ENCODE measurements at regions of chr3 and their contacts with region 1.

Region 1: GRCh38 chr3:11060500-11061251 is 68.1 kb downstream of the SLC6A1 start:
- H3K4me3 ChIP-seq: no peak overlapping the region
- H3K27ac ChIP-seq: no peak overlapping the region
- H3K4me1 ChIP-seq: no peaks in the 10 kb centered on the region
- CTCF ChIP-seq: peak; percentile 87

Region 2: GRCh38 chr3:10945683-10946287 is 114.9 kb before region 1 on chr3:
- CTCF ChIA-PET with region 1: interaction called, 142 read pairs
- POLR2A ChIA-PET with region 1: no interaction called
- H3K4me3 ChIP-seq: no peak overlapping the region
- H3K27ac ChIP-seq: no peak overlapping the region
- H3K4me1 ChIP-seq: no peaks in the 10 kb centered on the region
- CTCF ChIP-seq: peak; percentile 77

Region 3: DNA sequence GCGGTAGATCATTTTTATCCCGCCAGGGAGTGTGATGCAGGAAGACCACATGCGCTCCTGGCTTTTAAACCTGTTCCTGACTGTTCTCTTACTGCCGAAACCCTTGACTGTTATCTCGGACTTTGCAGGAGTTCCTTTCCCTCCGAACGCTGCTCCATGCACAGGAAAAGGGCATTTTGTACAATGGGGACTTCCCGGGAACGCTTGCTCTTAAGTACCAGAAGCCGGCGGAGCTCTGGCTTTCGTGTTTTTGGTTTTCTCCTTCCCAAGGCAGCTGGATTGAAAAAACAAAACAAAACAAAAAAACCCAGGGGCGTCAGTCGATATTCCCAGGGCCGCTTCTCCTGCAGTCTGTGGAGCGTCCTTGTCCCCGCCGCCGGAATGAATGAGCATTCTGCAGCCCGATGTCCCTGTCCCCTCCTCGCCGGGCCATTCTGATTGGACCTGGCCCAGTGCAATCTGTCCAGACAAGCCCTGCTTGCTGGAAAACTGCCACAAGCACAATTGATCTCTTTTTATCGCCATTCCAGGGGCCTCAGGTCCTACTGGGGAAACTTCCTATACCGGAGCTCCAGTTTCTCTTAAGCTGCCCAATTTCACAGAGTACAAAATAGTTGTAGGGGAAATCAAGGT is 23.3 kb before region 1 on chr3:
- CTCF ChIA-PET with region 1: interaction called, 11 read pairs
- POLR2A ChIA-PET with region 1: no interaction called
- H3K4me3 ChIP-seq: no peak overlapping the region
- H3K27ac ChIP-seq: no peak overlapping the region
- H3K4me1 ChIP-seq: no peaks in the 10 kb centered on the region
- CTCF ChIP-seq: no peak

Region 4: DNA sequence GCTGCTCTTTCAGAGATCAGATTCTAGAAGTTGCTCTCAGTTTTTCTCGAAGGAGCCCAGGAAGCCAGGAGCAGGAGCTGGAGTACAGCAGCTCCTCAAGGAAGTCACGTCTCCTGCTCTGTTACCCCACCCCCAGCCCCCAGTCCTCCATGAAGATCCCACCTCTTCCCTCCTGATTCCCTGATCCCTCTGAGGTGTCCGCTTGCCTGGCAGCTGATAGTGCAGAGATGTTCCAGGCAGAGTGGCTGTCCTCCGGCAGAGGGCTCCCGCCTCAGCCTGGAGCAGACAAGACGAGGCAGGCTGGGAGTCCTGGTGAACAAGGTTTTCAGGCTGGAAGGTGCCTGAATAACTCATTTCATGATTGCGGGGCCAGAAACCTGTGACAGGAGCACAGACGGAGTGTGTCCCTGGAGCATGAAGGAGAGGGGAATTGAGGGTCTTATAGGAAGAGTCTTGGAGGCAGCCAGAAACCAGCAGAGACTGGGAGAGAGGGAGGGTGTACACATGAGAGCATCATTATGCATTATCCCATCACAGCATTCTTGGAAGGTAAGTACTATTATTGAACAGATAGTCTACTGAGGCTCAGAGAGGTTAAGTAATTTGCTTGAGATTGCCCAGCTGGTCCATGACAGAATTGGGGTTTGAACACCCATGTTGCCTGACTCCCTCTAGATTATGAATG is 94.8 kb after region 1 on chr3:
- CTCF ChIA-PET with region 1: interaction called, 13 read pairs
- POLR2A ChIA-PET with region 1: no interaction called
- H3K4me3 ChIP-seq: peak overlapping the region; percentile 48
- H3K27ac ChIP-seq: no peak overlapping the region
- H3K4me1 ChIP-seq: peaks cover 5% of the 10 kb centered on the region
- CTCF ChIP-seq: peak; percentile 69

Region 5: DNA sequence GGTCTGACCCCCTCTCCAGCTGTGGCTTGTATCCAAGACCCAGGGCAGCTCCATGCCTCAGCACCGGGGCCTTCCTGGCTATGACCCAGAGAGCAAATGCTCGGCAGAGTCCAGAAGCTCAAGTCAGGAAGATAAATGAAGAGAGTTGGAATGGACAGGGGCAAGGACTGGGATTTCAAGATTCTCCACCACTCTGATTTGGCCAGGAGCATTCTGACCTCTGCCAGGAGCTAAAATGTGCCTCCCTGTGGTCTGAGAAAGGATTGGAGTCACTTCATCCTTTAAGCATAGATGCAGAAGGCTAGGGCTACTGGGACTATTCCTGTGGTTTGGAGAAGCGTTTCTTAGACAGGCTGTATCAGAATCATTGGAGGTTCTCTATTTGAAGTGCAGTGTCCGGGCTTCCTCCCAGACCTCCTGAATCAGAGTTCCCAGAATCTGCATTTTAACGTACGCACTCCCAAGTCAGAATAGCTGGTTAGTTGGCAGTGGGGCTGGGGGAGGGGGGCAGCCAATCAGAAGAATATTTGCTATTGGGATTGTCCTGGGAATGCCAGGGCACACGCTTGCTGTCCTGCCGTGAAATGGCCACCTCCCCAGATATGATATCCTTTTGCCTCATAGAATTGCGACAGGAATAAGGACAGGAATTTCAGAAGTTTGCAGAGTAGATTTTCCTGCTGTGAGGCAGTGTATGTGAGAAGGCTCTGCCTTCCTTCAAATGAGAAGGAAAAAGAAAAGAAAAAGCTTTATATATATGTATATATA is 151.0 kb after region 1 on chr3:
- CTCF ChIA-PET with region 1: interaction called, 26 read pairs
- POLR2A ChIA-PET with region 1: no interaction called
- H3K4me3 ChIP-seq: no peak overlapping the region
- H3K27ac ChIP-seq: no peak overlapping the region
- H3K4me1 ChIP-seq: no peaks in the 10 kb centered on the region
- CTCF ChIP-seq: no peak

Region 6: DNA sequence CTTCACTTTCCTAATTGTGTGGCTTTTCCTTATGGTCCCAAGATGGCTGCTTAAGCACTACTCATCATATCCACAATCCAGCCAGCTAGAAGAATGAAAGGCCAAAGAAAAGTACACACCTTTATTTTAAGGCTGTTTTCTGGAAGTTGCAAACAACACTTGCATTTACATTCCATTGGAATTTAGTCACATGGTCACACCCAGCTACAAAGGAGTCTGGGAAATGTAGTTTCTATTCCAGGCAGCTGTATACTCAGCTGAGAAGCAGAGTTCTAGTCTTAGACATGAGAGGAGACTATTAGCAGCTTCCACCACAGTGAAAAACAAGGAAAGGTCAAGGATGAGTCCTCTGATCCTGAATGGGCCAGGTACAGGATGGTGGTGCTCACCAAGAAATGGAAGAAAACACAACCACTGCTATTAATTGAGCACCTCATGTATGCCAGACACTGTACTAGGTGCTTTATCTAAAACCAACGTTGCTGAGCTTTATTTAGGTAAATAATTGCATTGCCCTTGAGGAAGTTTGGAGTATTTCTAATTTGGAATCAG is 183.5 kb after region 1 on chr3:
- CTCF ChIA-PET with region 1: no interaction called
- POLR2A ChIA-PET with region 1: no interaction called
- H3K4me3 ChIP-seq: no peak overlapping the region
- H3K27ac ChIP-seq: no peak overlapping the region
- H3K4me1 ChIP-seq: no peaks in the 10 kb centered on the region
- CTCF ChIP-seq: no peak

Measured in HEK293 (cell line).